ENCODE measurements at regions of chr2 and their contacts with region 1.

Region 1: DNA sequence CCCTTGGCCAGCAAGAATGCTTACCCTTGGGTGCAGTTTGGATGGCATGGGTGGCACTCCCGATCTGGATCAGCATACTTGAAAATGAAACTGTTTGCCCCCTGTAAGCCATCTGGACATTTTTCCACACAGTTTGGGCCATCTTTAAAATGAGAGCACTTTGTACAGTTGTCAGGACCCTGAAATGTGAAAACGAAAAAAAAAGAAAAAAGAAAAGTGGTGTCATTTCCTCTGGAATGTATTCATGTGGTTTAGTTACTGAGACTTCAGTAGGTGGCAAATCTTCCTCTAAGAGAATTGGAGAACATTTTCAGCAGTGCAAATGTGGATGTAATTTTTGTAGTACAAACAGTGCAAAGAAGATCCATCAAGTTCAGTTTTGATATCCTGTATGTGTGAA is 873.3 kb downstream of the ERBB4 start:
- DNase-seq: no peak
- ATAC-seq: no peak
- H3K4me3 ChIP-seq: no peak overlapping the region
- H3K4me3 Mint-ChIP-seq: no peak overlapping the region
- H3K27ac ChIP-seq: no peak overlapping the region
- H3K27ac Mint-ChIP-seq: no peak overlapping the region
- H3K4me1 ChIP-seq: no peaks in the 10 kb centered on the region
- H3K4me1 Mint-ChIP-seq: no peaks in the 10 kb centered on the region
- H3K27me3 ChIP-seq: no peaks in the 10 kb centered on the region
- H3K27me3 Mint-ChIP-seq: no peaks in the 10 kb centered on the region
- CTCF ChIP-seq: no peak

Region 2: DNA sequence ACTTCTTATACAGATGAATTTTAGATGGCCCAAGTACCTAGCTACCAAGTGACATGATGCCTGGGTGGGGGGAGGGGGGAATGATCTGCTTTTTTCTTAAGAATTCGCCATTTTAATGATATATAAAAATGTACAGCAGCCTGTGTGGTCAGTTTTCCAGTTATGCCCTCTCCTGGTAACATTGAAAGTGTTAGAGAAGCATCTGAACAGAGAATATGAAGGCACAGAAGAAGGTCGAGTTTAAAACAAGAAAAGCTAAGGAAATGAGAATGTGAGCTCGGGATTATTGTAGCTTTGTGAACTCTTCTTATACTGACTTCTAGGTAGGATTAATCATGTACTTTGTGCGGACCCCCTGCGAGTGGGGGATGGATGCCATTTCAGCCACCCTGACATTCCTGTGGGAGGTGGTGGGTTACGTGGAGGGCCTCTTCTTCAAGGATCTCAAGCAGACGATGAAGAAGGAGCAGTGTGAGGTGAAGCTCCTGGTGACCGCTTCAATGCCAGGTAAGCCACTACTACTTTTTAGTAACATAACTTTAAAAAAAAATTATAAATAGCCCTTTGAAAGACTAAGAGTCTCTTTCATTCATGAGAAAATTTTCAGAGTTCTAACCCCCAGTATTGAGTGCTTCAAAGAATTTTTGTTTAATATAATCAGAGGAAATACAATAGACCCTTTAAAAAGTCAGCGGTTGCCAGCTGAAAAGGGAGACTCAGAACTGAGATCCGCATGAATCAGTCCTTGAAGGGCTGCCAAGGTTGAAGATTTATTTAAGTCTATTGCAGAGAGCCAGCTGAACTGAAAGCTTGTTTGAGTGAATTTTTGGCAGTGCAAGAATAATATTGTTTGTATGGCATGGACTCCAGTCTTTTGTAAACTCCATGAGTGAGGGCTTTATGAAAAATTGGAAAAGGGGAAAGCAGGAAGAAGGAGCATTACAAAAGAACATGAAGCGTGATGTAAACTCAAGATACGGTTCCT is 1731.5 kb before region 1 on chr2:
- CTCF ChIA-PET with region 1: no interaction called
- POLR2A ChIA-PET with region 1: no interaction called
- intact Hi-C with region 1: no loop called
- DNase-seq: no peak
- ATAC-seq: no peak
- H3K4me3 ChIP-seq: no peak overlapping the region
- H3K4me3 Mint-ChIP-seq: no peak overlapping the region
- H3K27ac ChIP-seq: no peak overlapping the region
- H3K27ac Mint-ChIP-seq: no peak overlapping the region
- H3K4me1 ChIP-seq: no peaks in the 10 kb centered on the region
- H3K4me1 Mint-ChIP-seq: no peaks in the 10 kb centered on the region
- H3K27me3 ChIP-seq: peaks cover 2% of the 10 kb centered on the region in 2 experiments
- H3K27me3 Mint-ChIP-seq: peaks cover 2% of the 10 kb centered on the region
- CTCF ChIP-seq: no peak

Region 3: DNA sequence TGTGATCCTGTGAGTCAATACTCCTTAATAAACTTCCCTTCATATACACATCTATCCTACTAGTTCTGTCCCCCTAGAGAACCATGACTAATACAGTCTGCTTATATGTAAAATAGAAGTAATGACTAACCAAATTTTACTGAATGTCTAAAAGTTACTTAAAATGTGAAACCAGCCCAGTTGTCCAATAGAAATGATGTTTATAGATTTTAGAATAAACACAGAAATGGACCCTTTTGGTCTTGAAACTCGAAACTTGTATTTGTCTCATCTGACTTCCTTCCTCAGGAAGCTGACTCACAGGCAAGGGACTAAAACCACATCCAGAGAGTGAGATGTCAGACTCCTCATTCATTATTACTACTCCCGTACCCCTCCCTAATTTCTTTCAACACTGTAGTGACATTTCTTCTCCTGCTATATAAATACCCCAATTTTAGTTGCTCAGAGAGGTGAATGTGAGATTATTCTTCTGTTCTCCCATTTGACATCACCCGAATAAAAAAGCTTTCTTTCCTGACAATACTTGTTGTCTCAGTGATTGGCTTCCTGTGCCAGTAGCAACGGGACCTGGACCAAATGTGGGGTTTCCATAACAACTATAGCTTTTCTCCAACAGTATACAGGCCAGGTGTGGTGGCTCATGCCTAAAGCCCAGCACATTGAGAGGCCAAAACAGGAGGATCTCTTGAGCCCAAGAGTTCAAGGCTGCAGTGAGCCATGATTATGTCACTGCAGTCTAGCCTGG is 387.3 kb after region 1 on chr2:
- CTCF ChIA-PET with region 1: no interaction called
- POLR2A ChIA-PET with region 1: no interaction called
- intact Hi-C with region 1: loop called in 1 of 2 experiments (anchors 5 kb)
- DNase-seq: peak in 2 of 9 experiments; percentile 6 to 38
- ATAC-seq: no peak
- H3K4me3 ChIP-seq: no peak overlapping the region
- H3K4me3 Mint-ChIP-seq: no peak overlapping the region
- H3K27ac ChIP-seq: no peak overlapping the region
- H3K27ac Mint-ChIP-seq: no peak overlapping the region
- H3K4me1 ChIP-seq: no peaks in the 10 kb centered on the region
- H3K4me1 Mint-ChIP-seq: no peaks in the 10 kb centered on the region
- H3K27me3 ChIP-seq: no peaks in the 10 kb centered on the region
- H3K27me3 Mint-ChIP-seq: no peaks in the 10 kb centered on the region
- CTCF ChIP-seq: no peak